PC-9 (cell line): ENCODE measurements at regions of chr6 and their contacts with region 1.

Region 1: GRCh38 chr6:135014353-135014832 is 40.2 kb downstream of the HBS1L start:
- DNase-seq: no peak
- H3K4me3 ChIP-seq: no peak overlapping the region
- H3K27ac ChIP-seq: no peak overlapping the region
- H3K4me1 ChIP-seq: no peaks in the 10 kb centered on the region
- H3K27me3 ChIP-seq: no peaks in the 10 kb centered on the region
- CTCF ChIP-seq: no peak

Region 2: DNA sequence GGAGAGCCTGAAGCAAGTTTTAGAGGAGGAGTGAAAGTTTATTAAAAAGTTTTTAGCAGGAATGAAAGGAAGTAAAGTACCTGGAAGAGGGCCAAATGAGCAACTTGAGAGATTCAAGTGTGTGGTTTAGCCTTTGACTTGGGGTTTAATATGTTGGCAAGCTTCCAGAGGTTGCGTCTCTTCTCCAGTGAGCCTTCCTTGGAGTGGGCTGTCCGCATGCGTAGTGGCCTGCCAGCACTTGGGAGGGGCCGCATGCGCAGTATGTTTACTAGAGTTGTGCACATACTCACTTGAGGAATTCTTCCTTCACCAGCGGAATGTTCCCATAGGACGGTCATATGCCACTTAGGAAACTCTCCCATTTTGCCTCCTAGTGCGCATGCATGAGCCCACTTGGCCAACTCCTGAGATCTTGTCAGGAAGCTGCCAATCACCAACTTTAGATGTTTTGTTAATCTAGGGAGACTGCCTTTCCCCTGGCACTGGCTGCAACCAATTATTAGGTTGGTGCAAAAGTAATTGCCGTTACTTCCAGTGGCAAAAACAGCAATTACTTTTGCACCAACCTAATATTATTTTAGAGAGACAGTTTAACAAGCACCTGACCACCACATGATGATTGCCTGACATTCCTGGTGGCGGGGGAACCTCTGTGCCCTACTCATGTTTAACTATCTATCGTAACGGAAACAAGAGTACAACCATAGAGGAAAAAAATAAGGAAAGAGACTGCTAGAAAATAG is 299.5 kb before region 1 on chr6:
- CTCF ChIA-PET with region 1: no interaction called
- POLR2A ChIA-PET with region 1: no interaction called
- intact Hi-C with region 1: no loop called
- DNase-seq: peak in 1 of 2 experiments; percentile 72
- H3K4me3 ChIP-seq: no peak overlapping the region
- H3K27ac ChIP-seq: no peak overlapping the region
- H3K4me1 ChIP-seq: 0 out of 2 replicates have a peak, but pooled peaks cover 7% of the 10 kb centered on the region
- H3K27me3 ChIP-seq: no peaks in the 10 kb centered on the region
- CTCF ChIP-seq: no peak

Region 3: DNA sequence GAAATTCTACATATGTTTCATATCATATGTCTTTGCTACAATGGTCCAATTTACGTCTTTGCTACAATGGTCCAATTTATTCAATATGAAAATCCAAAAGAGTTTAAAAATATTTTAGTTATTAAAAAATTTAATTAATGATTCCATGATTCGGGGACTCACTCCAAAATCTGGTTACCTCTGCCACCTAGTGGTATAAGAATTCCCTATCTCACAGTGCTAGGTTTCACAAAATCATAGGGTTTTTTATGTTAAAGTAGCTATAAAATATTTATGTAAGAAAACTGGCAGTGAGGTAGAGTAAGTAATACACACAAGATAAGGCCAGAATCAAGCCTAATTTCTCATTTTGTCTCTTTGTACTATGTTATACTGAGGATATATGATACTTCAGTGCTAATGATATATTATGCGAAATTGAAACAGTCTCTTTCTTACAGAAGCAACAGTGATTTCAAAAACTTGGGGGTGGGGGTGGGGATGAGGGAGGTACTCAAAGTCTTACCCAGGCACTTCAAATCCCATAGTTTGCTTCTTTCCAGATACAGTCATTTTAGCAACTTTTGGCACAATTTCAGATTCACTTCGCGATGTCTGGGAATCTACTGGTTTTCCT is 12.1 kb before region 1 on chr6:
- CTCF ChIA-PET with region 1: no interaction called
- POLR2A ChIA-PET with region 1: no interaction called
- intact Hi-C with region 1: loop called (anchors 2 kb)
- DNase-seq: no peak
- H3K4me3 ChIP-seq: no peak overlapping the region
- H3K27ac ChIP-seq: no peak overlapping the region
- H3K4me1 ChIP-seq: no peaks in the 10 kb centered on the region
- H3K27me3 ChIP-seq: no peaks in the 10 kb centered on the region
- CTCF ChIP-seq: peak; percentile 88

Region 4: GRCh38 chr6:135344526-135344925 is 330.1 kb after region 1 on chr6:
- CTCF ChIA-PET with region 1: no interaction called
- POLR2A ChIA-PET with region 1: no interaction called
- intact Hi-C with region 1: no loop called
- DNase-seq: no peak
- H3K4me3 ChIP-seq: no peak overlapping the region
- H3K27ac ChIP-seq: no peak overlapping the region
- H3K4me1 ChIP-seq: no peaks in the 10 kb centered on the region
- H3K27me3 ChIP-seq: no peaks in the 10 kb centered on the region
- CTCF ChIP-seq: no peak